CD4-positive, alpha-beta memory T cell (primary cell): ENCODE measurements at regions of chrX and their contacts with region 1.

Region 1: GRCh38 chrX:18390941-18391538 is 34.4 kb upstream of the CDKL5 start:
- DNase-seq: peak; percentile 55 to 62 (median 61)
- H3K4me3 ChIP-seq: no peak overlapping the region
- H3K4me3 Mint-ChIP-seq: peak overlapping the region in 1 of 8 donors; percentile 21
- H3K27ac ChIP-seq: no peak overlapping the region
- H3K27ac Mint-ChIP-seq: peak overlapping the region in 5 of 7 donors; percentile 7 to 70 (median 53)
- H3K4me1 ChIP-seq: no peaks in the 10 kb centered on the region
- H3K4me1 Mint-ChIP-seq: peaks cover 0 to 4% (median 0%) of the 10 kb centered on the region in 4 donors
- H3K27me3 ChIP-seq: no peaks in the 10 kb centered on the region
- H3K27me3 Mint-ChIP-seq: no peaks in the 10 kb centered on the region

Region 2: DNA sequence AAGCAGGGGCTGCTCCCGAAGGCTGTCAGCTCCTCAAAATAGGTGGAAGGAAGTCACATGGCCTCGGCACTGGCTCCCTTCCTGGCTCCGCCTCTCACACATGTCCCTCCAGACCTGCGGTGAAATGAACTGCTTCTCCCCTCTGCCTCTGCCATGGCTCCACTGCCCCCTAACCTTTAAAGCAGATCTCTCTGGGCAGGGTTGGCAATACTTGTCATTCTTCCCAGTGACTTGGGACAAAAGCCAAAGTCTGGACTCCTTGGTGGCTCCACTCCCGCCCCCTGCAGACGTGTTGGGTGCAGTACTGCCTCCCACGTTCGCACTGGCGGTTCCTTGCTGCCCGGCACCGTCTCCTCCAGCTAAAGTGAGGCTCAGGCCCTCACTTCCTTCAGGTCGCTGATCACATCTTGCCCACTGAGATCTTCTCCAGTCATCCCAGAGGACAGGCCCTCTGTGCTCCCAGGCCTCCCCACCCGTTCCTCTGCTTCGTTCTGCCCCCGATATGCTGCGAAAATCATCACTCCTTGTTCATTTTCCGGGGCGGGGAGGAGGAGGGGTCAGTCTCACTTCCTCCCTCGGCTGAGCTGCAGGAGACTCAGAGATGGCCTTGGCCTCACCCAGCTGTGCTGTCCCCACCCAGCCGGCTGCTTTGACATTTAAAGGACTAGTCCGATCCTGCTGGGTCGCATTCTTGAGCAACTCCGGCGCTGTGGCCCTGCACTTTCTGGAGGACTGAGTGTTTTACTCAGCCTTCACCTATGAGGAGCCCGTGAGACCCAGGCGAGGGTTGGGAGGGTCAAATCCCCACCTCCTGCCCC is 495.5 kb after region 1 on chrX:
- CTCF ChIA-PET with region 1: no interaction called
- POLR2A ChIA-PET with region 1: no interaction called
- intact Hi-C with region 1: loop called (anchors 1 kb)
- DNase-seq: peak; percentile 32 to 42 (median 42)
- H3K4me3 ChIP-seq: peak overlapping the region in 1 of 2 donors; percentile 56
- H3K4me3 Mint-ChIP-seq: peak overlapping the region; percentile 84 to 94 (median 90)
- H3K27ac ChIP-seq: peak overlapping the region; percentile 28
- H3K27ac Mint-ChIP-seq: peak overlapping the region; percentile 82 to 98 (median 92)
- H3K4me1 ChIP-seq: peaks cover 14% of the 10 kb centered on the region
- H3K4me1 Mint-ChIP-seq: peaks cover 12 to 32% (median 20%) of the 10 kb centered on the region in 4 donors
- H3K27me3 ChIP-seq: no peaks in the 10 kb centered on the region
- H3K27me3 Mint-ChIP-seq: no peaks in the 10 kb centered on the region

Region 3: GRCh38 chrX:18899796-18900447 is 508.9 kb after region 1 on chrX:
- CTCF ChIA-PET with region 1: no interaction called
- POLR2A ChIA-PET with region 1: no interaction called
- intact Hi-C with region 1: loop called (anchors 1 kb)
- DNase-seq: no peak
- H3K4me3 ChIP-seq: no peak overlapping the region
- H3K4me3 Mint-ChIP-seq: no peak overlapping the region
- H3K27ac ChIP-seq: no peak overlapping the region
- H3K27ac Mint-ChIP-seq: peak overlapping the region in 2 of 7 donors; percentile 10 to 14
- H3K4me1 ChIP-seq: no peaks in the 10 kb centered on the region
- H3K4me1 Mint-ChIP-seq: no peaks in the 10 kb centered on the region
- H3K27me3 ChIP-seq: no peaks in the 10 kb centered on the region
- H3K27me3 Mint-ChIP-seq: no peaks in the 10 kb centered on the region

Region 4: GRCh38 chrX:19334945-19335626 is 944.0 kb after region 1 on chrX:
- CTCF ChIA-PET with region 1: interaction called, 11 read pairs
- POLR2A ChIA-PET with region 1: no interaction called
- intact Hi-C with region 1: loop called (anchors 1 kb)
- DNase-seq: peak in 3 of 5 donors; percentile 10 to 22 (median 20)
- H3K4me3 ChIP-seq: no peak overlapping the region
- H3K4me3 Mint-ChIP-seq: no peak overlapping the region
- H3K27ac ChIP-seq: no peak overlapping the region
- H3K27ac Mint-ChIP-seq: peak overlapping the region in 4 of 7 donors; percentile 22 to 73 (median 36)
- H3K4me1 ChIP-seq: no peaks in the 10 kb centered on the region
- H3K4me1 Mint-ChIP-seq: peaks cover 0 to 3% (median under 1%) of the 10 kb centered on the region in 4 donors
- H3K27me3 ChIP-seq: no peaks in the 10 kb centered on the region
- H3K27me3 Mint-ChIP-seq: peaks cover 0 to 2% of the 10 kb centered on the region in 2 donors